ENCODE measurements at regions of chr20 and their contacts with region 1.

Region 1: DNA sequence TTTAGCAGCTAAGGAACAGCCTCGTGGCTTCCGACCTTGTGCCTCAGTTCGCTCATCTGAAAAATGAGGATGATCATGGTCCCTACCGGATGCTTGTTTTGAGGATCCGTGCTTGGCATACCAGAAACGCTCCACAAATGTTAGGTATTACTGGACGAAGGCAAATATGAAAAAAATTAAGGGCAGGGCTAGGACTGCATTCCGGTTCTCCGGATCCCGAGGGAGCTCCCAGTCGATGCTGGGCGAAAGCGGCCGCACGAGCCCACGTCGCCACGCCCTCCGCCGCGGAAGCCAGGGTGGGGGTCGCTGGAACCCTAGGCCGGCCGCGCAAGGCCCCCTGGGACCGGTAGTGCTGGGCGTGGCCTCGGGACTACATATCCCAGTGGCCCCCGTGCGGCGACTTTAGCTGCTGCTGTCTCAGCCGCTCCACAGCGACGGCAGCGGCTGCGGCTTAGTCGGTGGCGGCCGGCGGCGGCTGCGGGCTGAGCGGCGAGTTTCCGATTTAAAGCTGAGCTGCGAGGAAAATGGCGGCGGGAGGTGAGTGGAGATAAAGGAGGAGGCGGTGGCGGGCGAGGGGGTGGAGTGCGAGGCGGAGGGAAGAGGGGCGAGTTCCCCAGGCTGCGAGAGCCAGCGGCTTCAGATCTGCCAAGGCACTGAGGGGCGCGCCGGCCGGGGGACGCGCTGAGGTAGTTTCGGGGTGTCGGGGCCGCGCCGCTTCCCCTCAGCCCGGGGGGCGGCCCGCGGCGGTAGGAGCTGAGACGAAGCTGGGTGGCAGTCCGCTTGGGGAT is at the start of gene NCOA3:
- DNase-seq: peak; percentile 91
- H3K4me3 Mint-ChIP-seq: peak within 1 kb of the TSS; percentile 100
- H3K27ac Mint-ChIP-seq: peak within 1 kb of the TSS; percentile 99
- H3K4me1 Mint-ChIP-seq: peaks cover 49% of the 10 kb centered on the region
- H3K27me3 Mint-ChIP-seq: no peaks in the 10 kb centered on the region
- total RNA-seq, gene NCOA3: 119 and 126 TPM in 2 replicates

Region 2: DNA sequence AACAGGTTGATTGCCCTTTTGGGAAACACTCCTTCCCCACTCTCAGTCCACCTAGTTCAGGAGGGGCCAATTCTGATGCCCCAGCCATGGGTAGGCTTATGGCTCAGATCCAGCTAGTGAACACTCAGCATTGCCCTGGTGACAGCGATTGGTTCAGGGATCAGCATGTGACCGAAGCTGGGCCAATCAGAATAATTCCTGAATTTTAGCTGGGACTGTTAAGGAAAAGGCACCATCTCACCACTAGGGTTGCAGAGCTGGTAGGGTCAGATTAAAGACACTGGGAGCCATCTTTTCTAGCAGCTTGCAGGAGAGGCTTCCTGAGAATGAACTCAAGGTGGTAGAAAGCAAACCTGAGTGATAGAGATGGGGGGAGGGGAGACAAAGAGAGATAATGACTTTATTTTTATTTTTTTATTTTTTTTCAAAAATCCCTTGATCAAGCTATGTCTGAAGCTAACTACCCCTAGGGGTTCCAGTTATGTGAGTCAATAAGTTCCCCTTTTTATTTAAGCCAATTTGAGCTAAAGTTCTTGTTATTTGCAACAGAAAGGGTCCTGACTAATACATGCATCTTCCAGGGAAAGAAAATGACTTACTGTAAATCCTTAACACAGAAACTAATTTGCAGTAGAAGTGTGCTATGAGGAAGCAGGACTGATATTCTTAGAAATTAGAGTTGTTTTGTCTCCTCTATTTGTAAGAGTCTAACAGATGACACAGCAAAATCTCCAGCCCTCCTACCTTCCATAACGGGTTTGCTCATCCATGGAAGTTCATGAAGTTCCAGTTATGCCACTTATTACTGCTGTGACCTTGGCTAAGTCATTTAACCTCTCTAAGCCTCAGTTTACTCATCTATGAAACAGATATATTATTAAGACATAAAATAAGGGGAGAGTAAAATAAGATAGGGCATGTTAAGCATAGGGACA is 562.4 kb before region 1 on chr20:
- intact Hi-C with region 1: no loop called
- DNase-seq: no peak
- H3K4me3 Mint-ChIP-seq: no peak overlapping the region
- H3K27ac Mint-ChIP-seq: no peak overlapping the region
- H3K4me1 Mint-ChIP-seq: no peaks in the 10 kb centered on the region
- H3K27me3 Mint-ChIP-seq: no peaks in the 10 kb centered on the region

Region 3: GRCh38 chr20:47196091-47197081 is 305.3 kb before region 1 on chr20:
- intact Hi-C with region 1: loop called (anchors 10 kb)
- DNase-seq: peak; percentile 69
- H3K4me3 Mint-ChIP-seq: no peak overlapping the region
- H3K27ac Mint-ChIP-seq: no peak overlapping the region
- H3K4me1 Mint-ChIP-seq: peaks cover 18% of the 10 kb centered on the region
- H3K27me3 Mint-ChIP-seq: peaks cover 12% of the 10 kb centered on the region

Region 4: GRCh38 chr20:47453142-47453782 is 48.4 kb before region 1 on chr20:
- intact Hi-C with region 1: loop called (anchors 1 kb)
- DNase-seq: peak; percentile 58
- H3K4me3 Mint-ChIP-seq: no peak overlapping the region
- H3K27ac Mint-ChIP-seq: peak overlapping the region; percentile 78
- H3K4me1 Mint-ChIP-seq: peaks cover 47% of the 10 kb centered on the region
- H3K27me3 Mint-ChIP-seq: no peaks in the 10 kb centered on the region

Region 5: GRCh38 chr20:47515843-47516242 is 14.2 kb after region 1 on chr20:
- intact Hi-C with region 1: loop called (anchors 2 kb)
- DNase-seq: no peak
- H3K4me3 Mint-ChIP-seq: no peak overlapping the region
- H3K27ac Mint-ChIP-seq: peak overlapping the region; percentile 91
- H3K4me1 Mint-ChIP-seq: peaks cover 27% of the 10 kb centered on the region
- H3K27me3 Mint-ChIP-seq: no peaks in the 10 kb centered on the region

Region 6: GRCh38 chr20:47576516-47577033 is 74.9 kb after region 1 on chr20:
- intact Hi-C with region 1: no loop called
- DNase-seq: no peak
- H3K4me3 Mint-ChIP-seq: peak overlapping the region; percentile 70
- H3K27ac Mint-ChIP-seq: peak overlapping the region; percentile 82
- H3K4me1 Mint-ChIP-seq: peaks cover 57% of the 10 kb centered on the region
- H3K27me3 Mint-ChIP-seq: no peaks in the 10 kb centered on the region

Region 7: GRCh38 chr20:47610247-47610944 is 108.7 kb after region 1 on chr20:
- intact Hi-C with region 1: loop called (anchors 2 kb)
- DNase-seq: peak; percentile 64
- H3K4me3 Mint-ChIP-seq: peak overlapping the region; percentile 76
- H3K27ac Mint-ChIP-seq: peak overlapping the region; percentile 99
- H3K4me1 Mint-ChIP-seq: peaks cover 77% of the 10 kb centered on the region
- H3K27me3 Mint-ChIP-seq: no peaks in the 10 kb centered on the region

Region 8: GRCh38 chr20:47886460-47887041 is 384.9 kb after region 1 on chr20:
- intact Hi-C with region 1: no loop called
- DNase-seq: no peak
- H3K4me3 Mint-ChIP-seq: no peak overlapping the region
- H3K27ac Mint-ChIP-seq: no peak overlapping the region
- H3K4me1 Mint-ChIP-seq: no peaks in the 10 kb centered on the region
- H3K27me3 Mint-ChIP-seq: no peaks in the 10 kb centered on the region

Measured in activated T-helper 2 cell treated with anti-CD3 and anti-CD28 coated beads, Interferon-gamma antibody, Interleukin-2, Interleukin-4, amounts not matched to agents 10 μg/mL and 5 μg/mL and 100 μg/mL, durations not matched to agents 14 hours and 24 hours and 36 hours (primary cell).